ENCODE measurements at regions of chr10 and their contacts with region 1.

Region 1: DNA sequence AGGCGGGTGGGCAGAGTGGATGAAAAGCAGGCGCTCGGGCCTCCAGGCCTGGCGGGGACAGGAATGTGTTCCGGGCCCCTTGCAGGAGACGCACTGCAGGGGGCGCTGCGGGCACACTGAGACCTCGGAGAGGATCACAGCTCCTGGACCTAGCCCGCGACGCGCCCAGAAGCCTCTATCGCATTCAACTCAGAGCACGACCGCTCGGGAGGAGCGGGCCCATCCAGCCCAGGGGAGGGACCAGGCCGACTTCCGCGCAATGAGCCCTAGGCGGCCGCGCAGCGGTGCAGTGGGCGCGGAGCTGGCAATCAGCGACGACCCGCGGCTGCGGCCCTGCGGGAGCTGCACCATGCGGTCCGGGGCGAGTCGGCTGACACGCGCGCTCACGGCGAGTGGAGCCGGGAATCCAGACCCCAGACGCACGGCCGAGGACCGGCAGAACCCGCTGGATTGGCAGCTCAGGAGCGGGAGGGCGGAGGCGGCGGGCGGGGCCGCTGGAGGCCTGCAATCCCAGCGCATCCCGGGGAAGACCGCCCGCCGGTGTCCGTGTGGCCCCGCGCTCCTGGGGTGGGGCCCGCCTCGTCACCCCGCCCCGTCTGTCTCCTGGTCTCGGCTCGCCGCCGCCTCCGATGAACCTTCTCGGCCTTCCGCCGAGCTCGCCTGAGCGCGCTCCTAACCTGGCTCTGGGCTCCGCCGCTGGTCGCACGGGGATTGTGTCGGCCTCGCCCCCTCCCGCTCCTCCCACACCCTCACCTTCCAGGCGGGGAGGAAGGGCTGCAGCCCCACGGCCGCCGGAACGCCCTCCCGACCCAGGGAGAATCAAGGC is 33.5 kb upstream of the GRID1 start:
- DNase-seq: peak; percentile 96

Region 2: GRCh38 chr10:86585037-86585725 is 185.1 kb after region 1 on chr10:
- in situ Hi-C with region 1: loop called (anchors 25 kb)
- DNase-seq: peak; percentile 82

Region 3: DNA sequence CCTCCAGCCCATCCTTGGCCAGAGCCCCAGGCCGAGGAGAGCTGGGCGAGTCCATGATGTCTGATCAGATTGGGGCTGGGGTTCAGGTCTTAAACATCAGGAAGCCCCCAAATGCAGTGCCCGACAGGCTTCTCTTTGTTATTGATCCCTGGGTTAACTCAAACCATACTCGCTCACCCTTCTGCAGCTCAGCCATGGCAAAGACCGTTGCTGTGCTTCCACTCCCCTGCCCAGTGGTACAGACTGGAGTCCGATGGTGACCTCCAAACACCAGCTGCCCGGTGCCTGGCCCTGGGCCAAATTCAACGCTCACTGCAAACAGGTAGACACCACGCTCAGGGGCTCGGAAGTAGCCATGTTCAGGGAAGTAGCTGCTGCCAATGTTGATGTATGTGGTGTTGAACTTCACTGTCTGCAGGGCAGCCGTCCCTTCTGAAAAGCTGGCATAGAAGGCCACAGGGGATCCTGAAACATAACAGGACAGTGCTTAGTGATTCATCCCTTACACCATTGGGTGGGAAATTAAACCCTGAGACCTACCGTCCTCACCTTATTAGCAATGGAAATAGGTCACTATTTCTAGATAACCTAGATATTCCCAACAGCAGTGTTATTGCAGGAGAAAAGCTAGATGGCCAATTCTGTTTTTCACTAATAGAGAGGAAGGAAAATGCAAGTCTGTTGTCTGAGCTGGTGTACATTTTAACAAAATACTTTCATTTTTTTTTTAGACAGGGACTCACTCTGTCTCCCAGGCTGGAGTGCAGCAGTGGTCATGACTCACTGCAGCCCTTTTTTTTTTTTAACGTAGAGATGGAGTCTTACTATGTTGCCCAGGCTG is 536.8 kb after region 1 on chr10:
- in situ Hi-C with region 1: no loop called
- DNase-seq: no peak

Measured in KBM-7 (cell line).